Left lung (tissue), 14 donors: ENCODE measurements at regions of chr7 and their contacts with region 1.

Region 1: GRCh38 chr7:87234949-87235348 is 15.4 kb upstream of the TMEM243 start:
- DNase-seq: no peak
- ATAC-seq: no peak
- H3K4me3 ChIP-seq: no peak overlapping the region
- H3K27ac ChIP-seq: no peak overlapping the region
- H3K4me1 ChIP-seq: no peaks in the 10 kb centered on the region
- H3K27me3 ChIP-seq: no peaks in the 10 kb centered on the region
- CTCF ChIP-seq: no peak

Region 2: DNA sequence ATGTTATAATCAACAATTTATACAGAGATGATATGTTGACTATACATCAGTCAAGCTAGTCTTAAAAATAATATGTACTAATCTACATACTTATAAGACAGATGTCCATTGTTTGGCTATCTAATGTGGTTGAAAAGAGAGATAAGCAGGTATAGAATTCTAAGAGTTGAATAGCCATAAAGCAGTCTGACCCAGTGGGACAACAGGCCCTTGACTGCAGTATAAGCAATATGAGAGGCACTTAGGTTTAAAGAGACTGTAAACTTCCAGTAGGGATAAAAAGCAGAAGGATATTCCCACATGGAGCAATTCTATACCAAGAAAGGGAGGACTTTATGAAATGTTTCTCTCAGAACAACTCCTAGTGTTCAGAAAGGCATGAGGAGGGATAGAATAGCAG is 314.8 kb before region 1 on chr7:
- intact Hi-C with region 1: loop called in 1 of 2 experiments (anchors 5 kb)
- DNase-seq: no peak
- ATAC-seq: peak; percentile 53
- H3K4me3 ChIP-seq: no peak overlapping the region
- H3K27ac ChIP-seq: no peak overlapping the region
- H3K4me1 ChIP-seq: no peaks in the 10 kb centered on the region
- H3K27me3 ChIP-seq: no peaks in the 10 kb centered on the region
- CTCF ChIP-seq: no peak

Region 3: DNA sequence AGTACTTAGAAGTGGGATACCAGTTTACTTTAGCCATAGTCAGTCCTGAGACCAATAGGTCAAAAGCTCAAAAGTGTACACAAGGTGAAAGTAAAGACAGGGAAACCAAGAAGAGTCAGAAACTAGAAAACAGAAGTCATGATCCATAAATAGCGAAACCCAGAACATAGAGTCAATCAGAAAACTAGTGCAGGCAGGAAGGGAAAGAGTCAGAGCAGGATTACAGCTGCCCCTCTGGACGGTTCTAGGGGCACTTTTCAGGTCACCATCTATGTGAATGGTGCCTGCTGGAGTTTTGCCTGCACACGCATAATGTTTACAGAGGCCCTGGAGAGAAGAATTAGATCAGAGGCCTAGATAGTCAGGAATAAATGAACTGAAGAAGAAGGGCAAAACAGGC is 105.1 kb before region 1 on chr7:
- intact Hi-C with region 1: no loop called
- DNase-seq: no peak
- ATAC-seq: no peak
- H3K4me3 ChIP-seq: no peak overlapping the region
- H3K27ac ChIP-seq: no peak overlapping the region
- H3K4me1 ChIP-seq: no peaks in the 10 kb centered on the region
- H3K27me3 ChIP-seq: no peaks in the 10 kb centered on the region
- CTCF ChIP-seq: no peak